ENCODE measurements at regions of chr5 and their contacts with region 1.

Region 1: GRCh38 chr5:96536991-96537785 is 104.1 kb upstream of the PCSK1 start:
- DNase-seq: no peak
- H3K4me3 Mint-ChIP-seq: no peak overlapping the region
- H3K27ac Mint-ChIP-seq: peak overlapping the region; percentile 83
- H3K4me1 Mint-ChIP-seq: peaks cover 32% of the 10 kb centered on the region
- H3K27me3 Mint-ChIP-seq: no peaks in the 10 kb centered on the region

Region 2: GRCh38 chr5:95858661-95859326 is 678.4 kb before region 1 on chr5:
- CTCF ChIA-PET with region 1: no interaction called
- intact Hi-C with region 1: loop called (anchors 1 kb)
- DNase-seq: peak; percentile 98
- H3K4me3 Mint-ChIP-seq: peak overlapping the region; percentile 30
- H3K27ac Mint-ChIP-seq: peak overlapping the region; percentile 83
- H3K4me1 Mint-ChIP-seq: peaks cover 52% of the 10 kb centered on the region
- H3K27me3 Mint-ChIP-seq: no peaks in the 10 kb centered on the region

Region 3: GRCh38 chr5:96344678-96345577 is 192.3 kb before region 1 on chr5:
- CTCF ChIA-PET with region 1: no interaction called
- intact Hi-C with region 1: loop called (anchors 1 kb)
- DNase-seq: peak; percentile 27
- H3K4me3 Mint-ChIP-seq: no peak overlapping the region
- H3K27ac Mint-ChIP-seq: no peak overlapping the region
- H3K4me1 Mint-ChIP-seq: peaks cover 25% of the 10 kb centered on the region
- H3K27me3 Mint-ChIP-seq: peaks cover 4% of the 10 kb centered on the region

Region 4: GRCh38 chr5:96702503-96703383 is 165.6 kb after region 1 on chr5:
- CTCF ChIA-PET with region 1: no interaction called
- intact Hi-C with region 1: loop called (anchors 2 kb)
- DNase-seq: peak; percentile 89
- H3K4me3 Mint-ChIP-seq: peak overlapping the region; percentile 87
- H3K27ac Mint-ChIP-seq: peak overlapping the region; percentile 88
- H3K4me1 Mint-ChIP-seq: peaks cover 47% of the 10 kb centered on the region
- H3K27me3 Mint-ChIP-seq: no peaks in the 10 kb centered on the region

Region 5: GRCh38 chr5:97009212-97009898 is 472.2 kb after region 1 on chr5:
- CTCF ChIA-PET with region 1: no interaction called
- intact Hi-C with region 1: loop called (anchors 10 kb)
- DNase-seq: no peak
- H3K4me3 Mint-ChIP-seq: no peak overlapping the region
- H3K27ac Mint-ChIP-seq: peak overlapping the region; percentile 62
- H3K4me1 Mint-ChIP-seq: peaks cover 18% of the 10 kb centered on the region
- H3K27me3 Mint-ChIP-seq: no peaks in the 10 kb centered on the region

Measured in activated naive CD4-positive, alpha-beta T cell treated with anti-CD3 and anti-CD28 coated beads for 36 hours (primary cell).